K562 (cell line): ENCODE measurements at regions of chr19 and their contacts with region 1.

Region 1: DNA sequence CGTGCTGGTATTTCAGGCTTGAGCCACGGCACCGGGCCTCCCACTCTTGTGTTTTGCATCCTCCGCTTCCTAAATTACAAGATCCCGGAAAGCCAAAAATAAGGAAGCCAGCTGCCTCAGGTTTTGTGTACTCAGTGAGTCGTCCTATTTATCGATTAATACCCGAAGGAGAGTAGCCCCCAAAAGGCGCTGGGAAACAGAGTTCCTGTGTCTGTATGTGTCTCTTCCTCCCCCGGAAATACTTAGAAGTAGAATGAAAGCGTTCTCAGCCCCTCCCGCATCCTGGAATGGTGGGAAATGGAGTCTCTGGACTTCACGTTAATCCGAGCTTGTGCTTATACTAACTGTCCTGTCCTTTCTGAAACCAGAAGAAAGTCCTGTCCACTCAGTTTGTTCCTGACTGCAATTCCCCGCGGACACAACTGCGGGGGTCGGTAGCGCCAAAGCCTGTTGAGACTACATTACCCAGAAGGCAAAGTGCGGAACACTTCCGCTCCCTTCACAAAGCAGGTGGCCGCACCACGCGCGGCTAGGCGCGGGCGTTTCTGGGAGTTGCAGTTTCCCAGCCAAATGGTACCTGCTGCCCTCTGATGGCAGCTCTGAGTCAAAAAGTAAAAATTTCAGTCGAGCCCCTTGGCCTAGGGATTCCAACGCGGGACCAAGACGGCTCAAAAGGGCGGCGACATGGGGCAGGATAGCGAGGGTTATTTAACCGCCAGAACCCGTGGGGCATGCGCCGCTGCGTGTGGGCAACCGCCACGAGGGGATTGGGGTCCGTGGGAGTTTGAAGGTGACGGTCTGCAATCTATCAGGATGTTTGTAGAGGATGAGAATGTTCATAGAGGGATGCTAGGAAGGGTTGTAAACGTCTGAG is 2.2 kb upstream of the GSK3A start:
- DNase-seq: peak; percentile 63 to 98 (median 72)
- ATAC-seq: peak; percentile 65
- H3K4me3 ChIP-seq: peak overlapping the region; percentile 79
- H3K27ac ChIP-seq: peak overlapping the region; percentile 84
- H3K4me1 ChIP-seq: peaks cover 7 to 35% of the 10 kb centered on the region in 2 experiments; a peak in 4 of 5 replicates
- H3K27me3 ChIP-seq: no peaks in the 10 kb centered on the region
- CTCF ChIP-seq: peak; percentile 78 to 87 (median 83)
- EP300 ChIP-seq: peak; percentile 4; the same call in 1 of the 2 replicates
- POLR2A ChIP-seq: peak; percentile 63
- RAD21 ChIP-seq: peak; percentile 44; a peak in 3 of 4 replicates

Region 2: DNA sequence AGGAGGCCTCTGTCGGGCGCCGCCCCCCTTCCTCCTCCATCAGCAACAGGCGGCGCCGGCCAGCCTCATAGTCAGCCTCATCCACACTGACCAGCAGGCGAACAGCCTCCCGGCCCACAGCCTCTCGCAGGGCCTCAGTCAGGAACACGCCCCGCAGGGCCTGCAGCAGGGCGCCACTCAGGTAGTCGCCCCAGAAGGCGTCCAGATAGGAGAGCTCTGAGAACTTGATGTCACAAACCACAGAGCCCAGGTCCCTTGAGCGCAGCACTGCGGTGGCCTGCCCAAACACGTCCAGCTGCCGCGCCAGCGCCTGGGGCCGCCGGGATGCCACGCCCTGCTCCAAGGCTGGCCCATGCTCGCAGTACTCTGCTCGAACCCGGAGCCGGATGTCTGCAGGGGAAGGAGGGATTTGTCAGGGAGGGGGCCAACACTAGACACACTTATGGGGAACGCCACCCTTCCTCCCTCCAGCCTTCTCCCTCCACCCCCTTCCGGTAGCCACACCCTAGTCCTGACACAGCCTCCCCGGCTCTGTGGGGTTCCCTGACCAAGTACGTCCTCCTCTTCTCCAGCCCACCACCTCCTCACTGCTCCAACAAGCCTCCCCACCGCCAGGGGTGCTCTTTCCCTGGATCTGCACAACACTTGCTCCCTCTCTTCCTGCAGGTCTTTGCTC is 45.0 kb before region 1 on chr19:
- CTCF ChIA-PET with region 1: no interaction called
- POLR2A ChIA-PET with region 1: interaction called, 3 read pairs
- in situ Hi-C with region 1: no loop called
- intact Hi-C with region 1: loop called (anchors 5 kb)
- DNase-seq: peak; percentile 88 to 94 (median 90)
- ATAC-seq: peak; percentile 97
- H3K4me3 ChIP-seq: peak overlapping the region; percentile 27; the same call in 1 of the 2 replicates
- H3K27ac ChIP-seq: peak overlapping the region; percentile 70
- H3K4me1 ChIP-seq: peaks cover 37 to 53% of the 10 kb centered on the region in 2 experiments
- H3K27me3 ChIP-seq: no peaks in the 10 kb centered on the region; a peak in 1 of 5 replicates
- CTCF ChIP-seq: peak; percentile 75 to 84 (median 76)
- EP300 ChIP-seq: peak; percentile 10; the same call in 1 of the 2 replicates
- POLR2A ChIP-seq: no peak
- RAD21 ChIP-seq: peak; percentile 15 to 53; a peak in 3 of 4 replicates

Region 3: DNA sequence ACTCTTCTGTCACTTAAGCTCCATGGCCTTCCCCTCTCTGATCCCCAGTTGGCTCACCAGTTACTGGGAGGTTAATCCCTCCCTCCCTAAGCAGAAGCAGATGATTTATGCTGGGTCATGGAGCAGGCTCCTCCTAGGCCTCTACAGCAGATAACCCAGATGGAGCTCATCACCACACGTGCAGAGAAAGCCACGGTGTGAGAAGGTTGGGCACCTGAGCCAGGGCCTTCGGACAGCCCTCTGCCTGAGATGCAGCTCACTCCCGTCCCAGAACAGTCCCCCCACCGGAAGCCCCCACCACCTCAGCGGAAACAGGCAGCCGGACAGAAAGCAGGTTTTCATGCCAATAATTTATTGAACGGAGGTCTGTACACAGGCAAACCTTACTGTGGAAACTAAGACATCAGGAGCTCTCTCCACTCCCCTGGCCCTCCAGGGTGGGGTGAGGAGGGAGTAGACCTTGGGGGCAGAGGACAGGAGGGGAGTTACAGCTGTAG is 14.7 kb before region 1 on chr19:
- CTCF ChIA-PET with region 1: no interaction called
- POLR2A ChIA-PET with region 1: interaction called, 116 read pairs
- in situ Hi-C with region 1: no loop called
- intact Hi-C with region 1: no loop called
- DNase-seq: peak in 2 of 4 experiments; percentile 86 to 89
- ATAC-seq: peak; percentile 94
- H3K4me3 ChIP-seq: no peak overlapping the region
- H3K27ac ChIP-seq: peak overlapping the region; percentile 75
- H3K4me1 ChIP-seq: peaks cover 21 to 40% of the 10 kb centered on the region in 2 experiments
- H3K27me3 ChIP-seq: no peaks in the 10 kb centered on the region
- CTCF ChIP-seq: no peak
- EP300 ChIP-seq: peak; percentile 32; the same call in 1 of the 2 replicates
- POLR2A ChIP-seq: peak; percentile 59
- RAD21 ChIP-seq: no peak

Region 4: DNA sequence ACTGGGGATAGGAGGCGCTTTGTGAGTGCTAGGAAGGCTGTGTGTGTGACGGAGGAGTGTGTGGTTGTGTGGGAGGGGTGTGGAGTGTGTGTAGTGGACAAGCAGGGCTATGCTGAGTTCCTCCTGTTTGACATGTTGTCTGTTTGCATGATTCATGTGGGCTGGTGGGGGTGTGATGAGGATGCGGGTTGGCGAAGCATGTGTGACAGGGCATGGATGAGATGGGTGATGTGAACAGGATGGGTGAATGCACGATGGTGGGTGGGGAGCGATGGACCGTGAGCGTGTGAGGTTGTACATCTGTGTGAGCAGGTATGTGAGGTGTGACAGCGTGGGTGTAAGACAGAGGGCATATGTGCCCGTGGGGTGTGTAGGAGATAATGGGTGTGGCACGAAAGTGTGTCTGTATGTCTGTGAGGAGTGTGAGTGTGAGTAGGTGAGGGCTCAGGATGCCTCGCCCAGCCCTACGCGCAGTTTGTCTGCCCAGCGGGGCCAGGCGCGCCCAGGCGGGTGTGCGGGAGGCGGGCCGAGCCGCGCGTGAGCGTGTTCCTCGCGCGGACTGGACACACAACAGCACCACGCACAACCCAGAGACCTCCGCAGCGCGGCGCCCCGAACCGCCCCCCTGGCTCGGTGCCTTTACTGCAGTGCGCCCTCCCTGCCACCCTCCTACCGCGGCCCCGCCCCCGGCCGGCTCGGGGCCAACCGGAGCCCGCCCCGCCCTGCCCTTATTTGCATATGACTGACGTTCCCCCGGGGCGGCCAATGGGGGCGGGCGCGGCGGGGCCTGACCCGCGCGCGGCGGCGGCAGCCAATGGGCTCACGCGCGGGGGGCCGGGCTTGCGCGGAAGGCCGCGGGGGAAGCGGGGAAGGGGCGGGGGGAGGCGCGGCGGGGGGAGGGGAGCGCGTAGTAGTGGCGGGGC is 38.8 kb after region 1 on chr19:
- CTCF ChIA-PET with region 1: interaction called, 24 read pairs
- POLR2A ChIA-PET with region 1: interaction called, 10 read pairs
- in situ Hi-C with region 1: no loop called
- intact Hi-C with region 1: loop called (anchors 1 kb)
- DNase-seq: peak; percentile 84 to 98 (median 91)
- ATAC-seq: peak; percentile 78
- H3K4me3 ChIP-seq: peak overlapping the region; percentile 48
- H3K27ac ChIP-seq: peak overlapping the region; percentile 90
- H3K4me1 ChIP-seq: peaks cover 49 to 85% of the 10 kb centered on the region in 2 experiments
- H3K27me3 ChIP-seq: no peaks in the 10 kb centered on the region; a peak in 1 of 5 replicates
- CTCF ChIP-seq: no peak; a peak in 1 of 6 replicates
- EP300 ChIP-seq: no peak
- POLR2A ChIP-seq: peak; percentile 64
- RAD21 ChIP-seq: peak in 1 of 2 experiments; percentile 12; a peak in 1 of 4 replicates

Region 5: GRCh38 chr19:42330241-42330711 is 85.7 kb after region 1 on chr19:
- CTCF ChIA-PET with region 1: no interaction called
- POLR2A ChIA-PET with region 1: no interaction called
- in situ Hi-C with region 1: no loop called
- intact Hi-C with region 1: no loop called
- DNase-seq: no peak
- ATAC-seq: no peak
- H3K4me3 ChIP-seq: no peak overlapping the region
- H3K27ac ChIP-seq: no peak overlapping the region
- H3K4me1 ChIP-seq: peaks cover 5 to 25% of the 10 kb centered on the region in 2 experiments; a peak in 4 of 5 replicates
- H3K27me3 ChIP-seq: no peaks in the 10 kb centered on the region
- CTCF ChIP-seq: no peak
- EP300 ChIP-seq: no peak
- POLR2A ChIP-seq: no peak
- RAD21 ChIP-seq: no peak

Region 6: GRCh38 chr19:42396381-42397262 is 152.0 kb after region 1 on chr19:
- CTCF ChIA-PET with region 1: no interaction called
- POLR2A ChIA-PET with region 1: interaction called, 10 read pairs
- in situ Hi-C with region 1: no loop called
- intact Hi-C with region 1: no loop called
- DNase-seq: peak; percentile 99 to 100 (median 100)
- ATAC-seq: peak; percentile 99
- H3K4me3 ChIP-seq: peak overlapping the region; percentile 49
- H3K27ac ChIP-seq: peak overlapping the region; percentile 81
- H3K4me1 ChIP-seq: peaks cover 14 to 20% of the 10 kb centered on the region in 2 experiments
- H3K27me3 ChIP-seq: peaks cover 5 to 6% of the 10 kb centered on the region in 2 experiments; a peak in 3 of 5 replicates
- CTCF ChIP-seq: no peak
- EP300 ChIP-seq: no peak
- POLR2A ChIP-seq: peak; percentile 92
- RAD21 ChIP-seq: no peak